Activated B cell treated with CpG ODN at 0.5 μM for 24 hours (primary cell): ENCODE measurements at regions of chr10 and their contacts with region 1.

Region 1: GRCh38 chr10:21533467-21534279 is at the start of gene MLLT10:
- DNase-seq: peak; percentile 94
- ATAC-seq: peak; percentile 88
- H3K4me3 Mint-ChIP-seq: peak within 1 kb of the TSS; percentile 90
- H3K27ac Mint-ChIP-seq: peak within 1 kb of the TSS; percentile 92
- H3K4me1 Mint-ChIP-seq: peaks cover 18% of the 10 kb centered on the region
- H3K27me3 Mint-ChIP-seq: peaks cover 2% of the 10 kb centered on the region
- CTCF ChIP-seq: no peak
- total RNA-seq, gene MLLT10: 40.6 and 48.7 TPM in 2 replicates

Region 2: DNA sequence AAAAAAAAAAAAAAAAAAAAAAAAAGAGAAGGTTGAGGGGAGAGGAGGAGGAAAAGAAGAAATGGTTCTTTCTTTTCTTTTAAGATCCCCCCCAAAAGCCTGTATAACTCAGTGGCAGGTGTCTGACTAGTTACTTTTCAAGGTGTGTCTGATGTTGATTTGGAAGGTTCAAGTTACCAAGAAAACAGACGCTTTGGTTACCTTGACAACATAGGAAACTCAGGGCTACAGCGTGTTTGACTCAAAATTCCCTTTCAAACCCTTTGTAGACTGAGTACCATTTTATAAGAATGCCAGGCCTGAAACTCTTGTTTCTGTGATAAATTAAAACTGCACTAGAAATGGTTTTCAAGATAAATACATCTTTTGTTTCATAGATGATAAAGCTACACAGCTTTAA is 295.0 kb before region 1 on chr10:
- CTCF ChIA-PET with region 1: no interaction called
- POLR2A ChIA-PET with region 1: no interaction called
- intact Hi-C with region 1: no loop called
- DNase-seq: no peak
- ATAC-seq: no peak
- H3K4me3 Mint-ChIP-seq: no peak overlapping the region
- H3K27ac Mint-ChIP-seq: no peak overlapping the region
- H3K4me1 Mint-ChIP-seq: no peaks in the 10 kb centered on the region
- H3K27me3 Mint-ChIP-seq: no peaks in the 10 kb centered on the region
- CTCF ChIP-seq: no peak

Region 3: DNA sequence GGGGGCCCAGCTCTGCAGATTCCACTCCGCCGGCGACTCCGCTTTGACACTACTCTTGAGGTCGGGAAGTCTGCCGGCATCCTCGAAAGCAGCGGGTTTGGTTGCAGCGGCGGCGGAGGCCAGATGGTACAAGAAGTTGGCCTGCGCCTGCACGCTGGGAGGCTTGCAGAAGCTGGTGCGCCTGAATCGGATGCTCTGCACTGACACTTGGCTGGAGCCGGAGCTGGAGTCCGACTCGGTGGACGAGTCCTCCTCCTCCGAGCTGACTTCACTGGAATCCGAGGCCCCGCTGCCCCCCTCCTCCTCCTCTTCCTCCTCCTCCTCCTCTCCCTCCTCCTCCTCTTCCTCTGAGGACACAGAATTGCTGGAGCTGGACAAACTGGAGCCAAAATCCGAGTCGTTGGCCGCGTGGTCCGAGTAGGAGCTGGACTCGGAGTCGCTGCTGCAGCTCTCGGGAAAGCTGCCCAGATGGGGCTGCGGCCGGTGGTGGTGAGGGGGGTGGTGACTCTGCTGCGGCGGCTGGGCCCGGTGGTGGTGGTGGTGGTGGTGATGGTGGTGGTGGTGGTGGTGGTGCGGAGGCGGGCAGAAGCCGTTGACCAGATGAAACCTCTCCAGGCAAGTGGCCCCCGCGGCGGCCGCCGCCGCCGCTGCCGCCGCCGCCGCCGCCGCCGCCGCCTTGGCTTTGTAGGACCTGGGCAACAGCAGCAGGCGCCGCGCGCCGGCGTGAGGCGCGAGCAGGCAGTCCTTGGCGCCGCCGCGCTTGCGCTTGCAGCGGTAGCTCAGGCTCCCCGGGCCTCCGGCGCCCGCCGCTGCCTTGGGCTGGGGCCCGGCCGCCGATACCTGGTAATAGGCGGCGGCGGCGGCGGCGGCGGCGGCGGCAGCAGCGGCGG is 17.2 kb before region 1 on chr10:
- CTCF ChIA-PET with region 1: no interaction called
- POLR2A ChIA-PET with region 1: interaction called, 5 read pairs
- intact Hi-C with region 1: loop called (anchors 1 kb)
- DNase-seq: peak; percentile 48
- ATAC-seq: peak; percentile 79
- H3K4me3 Mint-ChIP-seq: peak overlapping the region; percentile 82
- H3K27ac Mint-ChIP-seq: no peak overlapping the region
- H3K4me1 Mint-ChIP-seq: peaks cover 38% of the 10 kb centered on the region
- H3K27me3 Mint-ChIP-seq: peaks cover 76% of the 10 kb centered on the region
- CTCF ChIP-seq: no peak

Region 4: GRCh38 chr10:22003079-22003913 is 469.6 kb after region 1 on chr10 and contains the start of gene DNAJC1:
- CTCF ChIA-PET with region 1: no interaction called
- POLR2A ChIA-PET with region 1: interaction called, 4 read pairs
- intact Hi-C with region 1: loop called (anchors 1 kb)
- DNase-seq: peak; percentile 98
- ATAC-seq: peak; percentile 92
- H3K4me3 Mint-ChIP-seq: peak within 1 kb of the TSS; percentile 87
- H3K27ac Mint-ChIP-seq: peak within 1 kb of the TSS; percentile 91
- H3K4me1 Mint-ChIP-seq: peaks cover 41% of the 10 kb centered on the region
- H3K27me3 Mint-ChIP-seq: no peaks in the 10 kb centered on the region
- CTCF ChIP-seq: no peak
- total RNA-seq, gene DNAJC1: 9.2 and 10.9 TPM in 2 replicates

Region 5: GRCh38 chr10:22228943-22229801 is 695.5 kb after region 1 on chr10:
- CTCF ChIA-PET with region 1: no interaction called
- POLR2A ChIA-PET with region 1: interaction called, 5 read pairs
- intact Hi-C with region 1: loop called (anchors 1 kb)
- DNase-seq: peak; percentile 81
- ATAC-seq: peak; percentile 79
- H3K4me3 Mint-ChIP-seq: peak overlapping the region; percentile 88
- H3K27ac Mint-ChIP-seq: peak overlapping the region; percentile 96
- H3K4me1 Mint-ChIP-seq: peaks cover 15% of the 10 kb centered on the region
- H3K27me3 Mint-ChIP-seq: peaks cover 7% of the 10 kb centered on the region
- CTCF ChIP-seq: no peak

Region 6: DNA sequence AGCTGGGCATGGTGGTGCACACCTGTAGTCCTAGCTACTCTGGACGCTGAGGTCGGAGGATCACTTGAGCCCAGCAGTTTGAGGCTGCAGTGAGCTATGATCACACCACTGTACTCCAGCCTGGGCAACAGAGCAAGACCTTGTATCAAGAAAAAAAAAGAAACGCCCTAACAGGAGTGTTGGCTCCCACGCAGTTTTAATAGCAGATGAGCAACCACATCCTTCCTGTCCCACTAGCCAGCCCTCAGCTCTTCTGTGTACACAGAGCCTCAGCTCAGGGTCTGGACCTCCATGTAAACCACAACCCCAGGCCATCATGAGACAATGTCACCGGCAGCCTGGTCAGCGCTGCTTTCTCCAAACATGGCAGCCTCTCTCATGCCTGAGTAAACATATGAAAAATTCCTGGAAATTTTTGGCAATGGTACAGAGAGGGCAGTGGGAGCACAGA is 1072.5 kb after region 1 on chr10:
- CTCF ChIA-PET with region 1: no interaction called
- POLR2A ChIA-PET with region 1: no interaction called
- intact Hi-C with region 1: loop called (anchors 10 kb)
- DNase-seq: no peak
- ATAC-seq: peak; percentile 75
- H3K4me3 Mint-ChIP-seq: peak overlapping the region; percentile 68
- H3K27ac Mint-ChIP-seq: peak overlapping the region; percentile 94
- H3K4me1 Mint-ChIP-seq: peaks cover 93% of the 10 kb centered on the region
- H3K27me3 Mint-ChIP-seq: no peaks in the 10 kb centered on the region
- CTCF ChIP-seq: no peak